Right cardiac atrium (tissue), 5 donors: ENCODE measurements at regions of chr7 and their contacts with region 1.

Region 1: DNA sequence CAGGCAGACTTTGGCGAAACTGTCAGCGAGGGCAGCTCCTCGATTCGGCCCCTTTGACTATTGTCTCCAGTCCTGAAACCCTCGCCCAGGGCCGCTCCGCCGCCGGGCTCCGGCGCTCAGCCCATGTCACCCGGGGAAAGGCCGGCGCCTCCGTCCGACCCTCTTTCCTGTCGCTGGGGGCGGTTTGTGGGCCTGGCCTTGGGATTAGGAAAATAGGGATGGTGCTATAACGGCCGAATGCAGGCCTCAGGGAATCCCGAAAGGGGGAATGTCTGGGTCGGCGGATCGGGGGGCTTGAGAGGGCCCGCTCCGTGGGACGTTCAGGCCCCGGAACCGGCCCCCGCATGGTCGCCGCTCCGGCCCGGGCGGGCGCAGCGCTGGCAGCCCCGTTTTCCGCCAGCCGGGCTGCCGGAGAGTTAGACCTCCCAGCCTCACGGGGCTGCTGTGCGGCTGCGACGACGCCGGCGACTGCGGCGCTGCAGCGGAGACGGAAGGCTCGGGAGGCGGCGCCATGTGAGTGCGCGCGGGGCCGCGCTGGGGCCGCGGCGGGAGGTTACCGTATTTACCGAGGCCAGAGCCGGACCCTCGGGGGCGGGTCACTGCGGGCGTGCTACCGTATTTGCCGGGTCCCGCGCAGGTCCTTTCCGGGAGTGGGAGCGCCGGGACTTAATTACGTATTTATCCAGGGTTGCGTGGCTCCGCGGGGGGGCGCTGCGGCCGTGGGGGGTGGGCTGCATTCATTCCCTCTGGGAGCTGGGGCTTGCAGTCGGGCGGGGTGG is 25.9 kb downstream of the ZNF775 start:
- DNase-seq: peak; percentile 92 to 97 (median 96)
- ATAC-seq: peak; percentile 94 to 96
- H3K4me3 ChIP-seq: peak overlapping the region; percentile 75
- H3K27ac ChIP-seq: peak overlapping the region; percentile 85
- H3K4me1 ChIP-seq: peaks cover 10% of the 10 kb centered on the region
- H3K27me3 ChIP-seq: no peaks in the 10 kb centered on the region

Region 2: GRCh38 chr7:150356265-150356897 is 48.6 kb before region 1 on chr7:
- intact Hi-C with region 1: loop called in 2 of 4 experiments (anchors 10 kb)
- DNase-seq: no peak
- ATAC-seq: no peak
- H3K4me3 ChIP-seq: no peak overlapping the region
- H3K27ac ChIP-seq: no peak overlapping the region
- H3K4me1 ChIP-seq: no peaks in the 10 kb centered on the region
- H3K27me3 ChIP-seq: no peaks in the 10 kb centered on the region

Region 3: GRCh38 chr7:150368096-150368883 is 36.7 kb before region 1 on chr7 and contains the start of gene REPIN1:
- intact Hi-C with region 1: loop called in 1 of 4 experiments (anchors 5 kb)
- DNase-seq: peak; percentile 94 to 98 (median 97)
- ATAC-seq: peak; percentile 87 to 89
- H3K4me3 ChIP-seq: peak within 1 kb of the TSS; percentile 63
- H3K27ac ChIP-seq: peak within 1 kb of the TSS; percentile 78
- H3K4me1 ChIP-seq: peaks cover 4% of the 10 kb centered on the region
- H3K27me3 ChIP-seq: no peaks in the 10 kb centered on the region
- total RNA-seq, gene REPIN1: 98.2 to 116 (median 107) TPM